Adrenal gland (tissue), 19 donors: ENCODE measurements at regions of chr16 and their contacts with region 1.

Region 1: DNA sequence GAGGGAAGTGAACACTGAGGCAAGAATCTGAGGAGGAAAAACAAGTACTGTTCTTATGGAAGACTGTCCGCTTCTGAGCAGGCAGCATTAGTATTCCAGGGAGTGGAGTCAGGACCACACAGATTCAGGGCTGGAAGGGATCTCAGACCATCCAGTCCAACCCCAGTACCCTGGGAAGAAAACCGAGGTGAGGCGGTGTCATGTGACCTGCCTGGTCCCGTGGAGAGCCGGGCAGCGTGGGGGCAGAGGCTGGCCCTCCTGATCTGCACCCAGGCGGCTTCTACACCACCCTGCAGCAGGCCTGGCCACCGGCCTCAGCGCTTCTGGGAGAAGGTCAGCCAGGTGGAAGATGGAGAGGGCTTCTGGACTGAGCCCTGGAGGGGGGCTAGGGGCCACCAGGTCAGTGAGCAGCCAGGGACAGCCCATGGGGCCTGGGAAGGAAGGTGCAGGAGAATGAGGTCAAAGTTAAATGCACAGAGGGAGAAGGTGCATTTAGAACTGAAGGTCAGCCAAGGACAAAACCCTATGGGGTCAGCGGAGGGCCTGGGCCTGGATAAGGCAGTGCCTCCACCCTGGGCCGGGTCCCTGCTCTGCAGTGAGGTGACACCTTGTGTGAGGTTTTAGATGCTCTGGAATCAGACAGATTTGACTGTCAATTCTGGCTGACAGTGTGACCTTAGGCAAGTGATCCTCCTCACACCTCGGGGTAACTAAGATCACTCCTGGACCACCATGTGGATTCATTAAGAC is 45.9 kb downstream of the VAC14 start:
- DNase-seq: no peak
- H3K4me3 ChIP-seq: no peak overlapping the region
- H3K27ac ChIP-seq: peak overlapping the region in 1 of 5 donors; percentile 5
- H3K4me1 ChIP-seq: peaks cover 19 to 25% of the 10 kb centered on the region in 2 donors
- H3K27me3 ChIP-seq: no peaks in the 10 kb centered on the region
- CTCF ChIP-seq: no peak
- POLR2A ChIP-seq: no peak

Region 2: GRCh38 chr16:70679666-70680494 is 75.1 kb before region 1 on chr16:
- intact Hi-C with region 1: loop called in 1 of 2 experiments (anchors 5 kb)
- DNase-seq: no peak
- H3K4me3 ChIP-seq: no peak overlapping the region
- H3K27ac ChIP-seq: peak overlapping the region in 3 of 5 donors; percentile 60 to 96 (median 87)
- H3K4me1 ChIP-seq: peaks cover 36 to 48% of the 10 kb centered on the region in 2 donors
- H3K27me3 ChIP-seq: no peaks in the 10 kb centered on the region
- CTCF ChIP-seq: peak in 3 of 6 experiments; percentile 68 to 89 (median 69)
- POLR2A ChIP-seq: no peak